Posterior vena cava (tissue), 2 donors: ENCODE measurements at regions of chr3 and their contacts with region 1.

Region 1: DNA sequence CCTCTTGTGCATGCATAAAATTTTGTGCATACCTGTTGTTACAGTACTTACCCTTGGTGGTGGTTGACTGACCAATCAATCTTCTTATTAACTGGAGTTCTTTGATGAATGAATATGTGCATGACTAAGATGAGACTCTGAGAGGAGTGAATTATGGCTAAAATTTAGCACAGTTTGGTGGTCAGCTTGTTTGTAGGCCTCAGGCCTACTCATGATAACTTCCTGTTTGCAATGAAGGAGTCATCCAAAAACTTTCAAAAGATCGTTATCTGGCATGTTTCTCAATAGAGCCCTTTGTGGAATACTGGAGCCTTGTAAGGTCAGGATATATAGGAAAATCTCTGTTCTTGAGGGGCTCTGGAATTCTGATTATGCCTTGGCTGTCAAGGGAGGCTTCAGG is 66.5 kb downstream of the LEKR1 start:
- DNase-seq: no peak

Region 2: GRCh38 chr3:156098437-156099035 is 794.2 kb before region 1 on chr3:
- intact Hi-C with region 1: loop called in 1 of 2 experiments (anchors 5 kb)
- DNase-seq: no peak

Region 3: DNA sequence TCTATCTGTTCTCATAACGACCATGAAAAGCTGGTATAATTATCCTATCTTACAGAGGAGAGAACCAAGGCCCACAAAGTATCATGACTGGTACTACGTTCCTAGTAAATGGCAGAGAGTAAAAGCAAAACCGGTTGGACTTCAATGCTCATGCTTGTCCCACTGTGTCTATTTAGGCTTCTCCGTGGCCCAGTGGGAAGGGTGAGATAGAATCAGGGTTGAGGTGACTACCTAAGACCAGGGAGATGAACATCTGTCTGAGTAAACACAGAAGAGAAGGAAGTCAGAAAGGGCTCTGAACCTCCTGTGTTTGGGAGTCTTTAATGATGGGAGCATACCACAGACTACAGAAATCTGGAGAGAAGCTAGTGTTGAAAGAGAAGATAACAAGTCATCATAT is 50.7 kb after region 1 on chr3:
- intact Hi-C with region 1: no loop called
- DNase-seq: no peak